HCT116 (cell line): ENCODE measurements at regions of chr9 and their contacts with region 1.

Region 1: DNA sequence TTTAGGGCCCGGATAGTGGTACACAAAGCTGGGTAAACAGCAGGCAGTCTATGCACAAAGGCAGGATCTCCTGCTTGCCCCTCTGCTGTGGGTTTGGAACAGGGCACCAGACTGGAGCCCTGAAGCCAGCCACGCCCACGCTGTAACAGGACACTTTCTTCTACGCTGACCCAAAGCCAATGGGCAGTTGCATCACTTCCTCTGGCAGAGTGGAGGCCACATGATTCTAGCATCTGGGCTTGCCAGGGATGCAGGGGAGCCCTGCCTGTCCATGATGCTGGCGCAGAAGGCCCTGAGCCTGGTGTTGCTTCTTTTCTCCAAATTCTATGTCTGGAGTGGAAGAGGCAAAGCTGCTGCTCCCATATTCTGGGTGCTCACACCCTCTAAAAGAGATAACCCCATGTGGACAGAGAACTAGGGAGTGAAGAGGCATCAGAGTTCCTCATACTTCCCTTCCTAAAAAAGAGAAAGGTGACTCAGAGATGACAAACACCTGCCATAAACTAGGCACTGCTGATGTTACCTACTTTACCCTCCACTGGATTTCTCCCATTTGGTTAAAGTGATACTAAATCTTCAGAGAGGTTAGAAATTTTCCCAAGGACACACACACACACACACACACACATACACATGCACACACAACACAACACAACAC is 260.3 kb upstream of the KLF4 start:
- DNase-seq: peak; percentile 85
- ATAC-seq: peak; percentile 86
- H3K4me3 ChIP-seq: peak overlapping the region in 1 of 2 experiments; percentile 39; a peak in 2 of 4 replicates
- H3K27ac ChIP-seq: peak overlapping the region; percentile 88
- H3K4me1 ChIP-seq: peaks cover 44 to 62% of the 10 kb centered on the region in 2 experiments
- H3K27me3 ChIP-seq: no peaks in the 10 kb centered on the region
- CTCF ChIP-seq: no peak
- POLR2A ChIP-seq: peak; percentile 52
- RAD21 ChIP-seq: no peak

Region 2: GRCh38 chr9:107489687-107490605 is 260.0 kb before region 1 on chr9 and contains the start of gene KLF4:
- CTCF ChIA-PET with region 1: no interaction called
- POLR2A ChIA-PET with region 1: interaction called, 3 read pairs
- RAD21 ChIA-PET with region 1: no interaction called
- intact Hi-C with region 1: loop called (anchors 1 kb)
- DNase-seq: peak; percentile 86
- ATAC-seq: peak; percentile 77
- H3K4me3 ChIP-seq: peak within 1 kb of the TSS; percentile 75 to 92
- H3K27ac ChIP-seq: peak within 1 kb of the TSS; percentile 74
- H3K4me1 ChIP-seq: peaks cover 0 to 40% of the 10 kb centered on the region in 2 experiments; a peak in 3 of 4 replicates
- H3K27me3 ChIP-seq: no peaks in the 10 kb centered on the region
- CTCF ChIP-seq: no peak
- POLR2A ChIP-seq: peak; percentile 41
- RAD21 ChIP-seq: no peak
- total RNA-seq, gene KLF4: 92.8 TPM

Region 3: GRCh38 chr9:108049026-108049591 is 299.2 kb after region 1 on chr9:
- CTCF ChIA-PET with region 1: no interaction called
- POLR2A ChIA-PET with region 1: interaction called, 3 read pairs
- RAD21 ChIA-PET with region 1: no interaction called
- intact Hi-C with region 1: loop called (anchors 5 kb)
- DNase-seq: peak; percentile 92
- ATAC-seq: peak; percentile 79
- H3K4me3 ChIP-seq: peak overlapping the region in 1 of 2 experiments; percentile 40; a peak in 2 of 4 replicates
- H3K27ac ChIP-seq: peak overlapping the region; percentile 17; the same call in 1 of the 2 replicates
- H3K4me1 ChIP-seq: peaks cover 9 to 66% of the 10 kb centered on the region in 2 experiments
- H3K27me3 ChIP-seq: no peaks in the 10 kb centered on the region
- CTCF ChIP-seq: no peak
- POLR2A ChIP-seq: no peak
- RAD21 ChIP-seq: peak; percentile 41

Region 4: GRCh38 chr9:108093773-108094675 is 344.1 kb after region 1 on chr9:
- CTCF ChIA-PET with region 1: no interaction called
- POLR2A ChIA-PET with region 1: no interaction called
- RAD21 ChIA-PET with region 1: no interaction called
- intact Hi-C with region 1: loop called (anchors 10 kb)
- DNase-seq: peak; percentile 97
- ATAC-seq: peak; percentile 95
- H3K4me3 ChIP-seq: peak overlapping the region in 1 of 2 experiments; percentile 29; a peak in 2 of 4 replicates
- H3K27ac ChIP-seq: peak overlapping the region; percentile 69
- H3K4me1 ChIP-seq: peaks cover 20 to 34% of the 10 kb centered on the region in 2 experiments
- H3K27me3 ChIP-seq: no peaks in the 10 kb centered on the region
- CTCF ChIP-seq: no peak
- POLR2A ChIP-seq: no peak
- RAD21 ChIP-seq: peak; percentile 34